Activated CD4-positive, alpha-beta T cell treated with anti-CD3 and anti-CD28 coated beads for 36 hours (primary cell): ENCODE measurements at regions of chr1 and their contacts with region 1.

Region 1: GRCh38 chr1:151281969-151282882 is at the start of gene ZNF687:
- DNase-seq: peak; percentile 99
- ATAC-seq: peak; percentile 93
- H3K4me3 Mint-ChIP-seq: peak within 1 kb of the TSS; percentile 81
- H3K27ac Mint-ChIP-seq: peak within 1 kb of the TSS; percentile 95
- H3K4me1 Mint-ChIP-seq: peaks cover 27% of the 10 kb centered on the region
- H3K27me3 Mint-ChIP-seq: no peaks in the 10 kb centered on the region
- total RNA-seq, gene ZNF687: 27.2 to 30.1 TPM

Region 2: GRCh38 chr1:150578965-150579798 is 703.0 kb before region 1 on chr1 and contains the start of gene MCL1:
- CTCF ChIA-PET with region 1: no interaction called
- POLR2A ChIA-PET with region 1: interaction called, 4 read pairs
- intact Hi-C with region 1: loop called in 1 of 2 experiments (anchors 5 kb)
- DNase-seq: peak; percentile 94
- ATAC-seq: peak; percentile 81
- H3K4me3 Mint-ChIP-seq: peak within 1 kb of the TSS; percentile 95
- H3K27ac Mint-ChIP-seq: peak within 1 kb of the TSS; percentile 97
- H3K4me1 Mint-ChIP-seq: peaks cover 24% of the 10 kb centered on the region
- H3K27me3 Mint-ChIP-seq: no peaks in the 10 kb centered on the region
- total RNA-seq, gene MCL1: 185 to 265 TPM

Region 3: DNA sequence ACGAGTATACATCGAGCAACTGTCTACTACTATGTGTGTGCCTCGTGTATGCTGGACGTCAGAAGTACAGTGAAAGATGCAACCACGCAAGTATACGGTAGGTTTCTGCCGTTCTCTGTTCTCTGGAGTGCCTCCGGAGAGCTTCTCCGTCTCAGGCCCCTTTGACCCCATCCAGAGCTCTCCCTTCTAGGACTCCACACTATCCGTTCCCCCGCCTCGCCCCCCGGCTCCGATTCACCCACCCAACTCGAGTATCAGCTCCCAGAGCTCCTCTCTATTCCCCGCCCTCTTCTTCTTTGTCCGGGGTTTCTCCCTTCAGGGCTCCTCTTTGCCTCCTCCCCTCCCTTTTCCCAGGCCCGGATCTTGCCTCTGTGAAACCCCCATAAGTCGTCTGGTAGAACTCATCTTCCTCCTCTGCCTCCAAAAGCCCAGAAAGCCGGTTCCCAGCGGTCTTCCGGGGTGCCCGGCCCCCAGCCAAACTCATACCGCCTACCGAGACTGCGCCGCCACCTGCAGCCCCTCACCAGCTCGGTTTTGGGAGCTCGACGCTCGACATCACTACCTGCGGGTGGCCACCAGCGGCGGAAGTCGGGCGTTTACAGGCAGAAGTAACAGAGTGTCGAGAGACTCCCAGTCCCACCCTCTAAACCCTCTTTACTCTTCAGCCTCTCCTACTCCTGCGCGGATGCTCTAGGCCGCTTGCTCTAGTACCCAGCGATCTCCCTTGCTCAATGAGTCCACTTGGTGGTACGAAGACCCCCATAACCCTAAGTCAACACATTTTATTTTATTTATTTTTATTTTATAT is 92.4 kb before region 1 on chr1 and contains the start of gene VPS72:
- CTCF ChIA-PET with region 1: no interaction called
- POLR2A ChIA-PET with region 1: interaction called, 9 read pairs
- intact Hi-C with region 1: loop called in 1 of 2 experiments (anchors 1 kb)
- DNase-seq: peak; percentile 93
- ATAC-seq: peak; percentile 96
- H3K4me3 Mint-ChIP-seq: peak within 1 kb of the TSS; percentile 96
- H3K27ac Mint-ChIP-seq: peak within 1 kb of the TSS; percentile 98
- H3K4me1 Mint-ChIP-seq: peaks cover 27% of the 10 kb centered on the region
- H3K27me3 Mint-ChIP-seq: no peaks in the 10 kb centered on the region
- total RNA-seq, gene VPS72: 77.1 to 77.8 TPM

Region 4: DNA sequence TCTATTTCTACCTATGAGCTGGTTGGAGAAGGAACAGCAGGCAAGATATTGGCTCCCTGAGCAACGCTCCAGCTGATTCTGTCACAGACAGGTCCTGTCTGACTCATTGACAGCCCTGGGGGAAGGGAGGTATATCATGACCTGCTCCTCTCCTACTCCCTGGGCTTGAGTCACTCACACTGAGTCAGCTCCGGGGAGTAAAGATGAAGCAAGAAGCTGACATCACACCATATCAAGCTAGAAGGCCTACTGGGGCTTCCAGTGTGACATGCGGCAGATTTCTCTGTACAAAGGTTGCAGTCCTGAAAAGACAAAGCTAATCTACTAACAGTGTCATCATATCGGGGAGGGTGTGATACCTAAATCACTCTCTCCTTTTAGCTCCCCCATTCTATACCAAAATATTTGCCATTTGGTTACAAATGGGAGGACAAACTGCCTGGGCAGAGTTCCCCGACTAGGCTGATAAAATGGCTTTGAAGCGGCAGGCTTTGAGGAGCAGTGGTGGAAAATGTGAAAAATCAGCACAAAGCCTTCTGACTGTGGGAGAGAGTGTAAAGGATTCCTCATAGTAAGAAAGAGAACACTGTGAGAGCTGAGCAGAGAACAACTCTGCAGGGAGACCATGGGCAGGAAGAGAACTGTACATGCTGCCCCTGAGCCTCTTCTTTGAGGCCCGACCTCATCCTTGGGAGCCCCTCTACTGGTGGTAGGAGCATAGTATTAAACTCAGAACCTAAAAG is 29.5 kb after region 1 on chr1:
- CTCF ChIA-PET with region 1: interaction called, 4 read pairs
- POLR2A ChIA-PET with region 1: interaction called, 22 read pairs
- intact Hi-C with region 1: loop called (anchors 1 kb)
- DNase-seq: peak; percentile 92
- ATAC-seq: peak; percentile 99
- H3K4me3 Mint-ChIP-seq: peak overlapping the region; percentile 13
- H3K27ac Mint-ChIP-seq: peak overlapping the region; percentile 99
- H3K4me1 Mint-ChIP-seq: peaks cover 41% of the 10 kb centered on the region
- H3K27me3 Mint-ChIP-seq: no peaks in the 10 kb centered on the region

Region 5: GRCh38 chr1:151346769-151347522 is 64.7 kb after region 1 on chr1 and contains the start of gene RFX5:
- CTCF ChIA-PET with region 1: interaction called, 3 read pairs
- POLR2A ChIA-PET with region 1: interaction called, 12 read pairs
- intact Hi-C with region 1: loop called (anchors 1 kb)
- DNase-seq: peak; percentile 96
- ATAC-seq: peak; percentile 98
- H3K4me3 Mint-ChIP-seq: peak within 1 kb of the TSS; percentile 96
- H3K27ac Mint-ChIP-seq: peak within 1 kb of the TSS; percentile 94
- H3K4me1 Mint-ChIP-seq: peaks cover 31% of the 10 kb centered on the region
- H3K27me3 Mint-ChIP-seq: no peaks in the 10 kb centered on the region
- total RNA-seq, gene RFX5: 47.6 to 50.4 TPM

Region 6: GRCh38 chr1:151539990-151540981 is 258.1 kb after region 1 on chr1 and contains the start of gene TUFT1:
- CTCF ChIA-PET with region 1: no interaction called
- POLR2A ChIA-PET with region 1: no interaction called
- intact Hi-C with region 1: loop called in 1 of 2 experiments (anchors 1 kb)
- DNase-seq: peak; percentile 97
- ATAC-seq: peak; percentile 99
- H3K4me3 Mint-ChIP-seq: peak within 1 kb of the TSS; percentile 90
- H3K27ac Mint-ChIP-seq: peak within 1 kb of the TSS; percentile 69
- H3K4me1 Mint-ChIP-seq: peaks cover 21% of the 10 kb centered on the region
- H3K27me3 Mint-ChIP-seq: peaks cover 7% of the 10 kb centered on the region
- total RNA-seq, gene TUFT1: 3.2 TPM